Activated B cell treated with CpG ODN at 0.5 μM for 24 hours (primary cell): ENCODE measurements at regions of chr20 and their contacts with region 1.

Region 1: DNA sequence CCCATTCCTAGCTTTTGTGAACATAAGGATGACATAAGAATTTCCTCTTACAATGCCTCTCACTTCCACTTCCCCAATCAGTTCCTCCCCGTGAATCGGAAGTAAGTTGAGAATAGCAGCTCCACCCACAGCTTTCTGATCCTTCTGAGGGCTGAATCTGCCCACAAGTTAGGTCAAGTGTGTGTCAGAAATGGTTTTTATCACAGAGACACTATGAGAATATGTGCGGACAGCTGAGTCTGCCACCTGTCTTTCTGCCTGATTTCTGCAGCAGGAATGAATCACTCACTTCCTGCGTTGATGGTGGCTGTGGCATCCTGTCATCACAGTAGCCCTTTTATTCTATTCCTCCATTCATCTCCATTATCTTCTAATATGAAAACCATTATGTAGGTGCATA is 70.2 kb downstream of the RIN2 start:
- DNase-seq: no peak
- ATAC-seq: peak; percentile 96
- H3K4me3 Mint-ChIP-seq: peak overlapping the region; percentile 6
- H3K27ac Mint-ChIP-seq: peak overlapping the region; percentile 56
- H3K4me1 Mint-ChIP-seq: peaks cover 58% of the 10 kb centered on the region
- H3K27me3 Mint-ChIP-seq: no peaks in the 10 kb centered on the region
- CTCF ChIP-seq: no peak

Region 2: DNA sequence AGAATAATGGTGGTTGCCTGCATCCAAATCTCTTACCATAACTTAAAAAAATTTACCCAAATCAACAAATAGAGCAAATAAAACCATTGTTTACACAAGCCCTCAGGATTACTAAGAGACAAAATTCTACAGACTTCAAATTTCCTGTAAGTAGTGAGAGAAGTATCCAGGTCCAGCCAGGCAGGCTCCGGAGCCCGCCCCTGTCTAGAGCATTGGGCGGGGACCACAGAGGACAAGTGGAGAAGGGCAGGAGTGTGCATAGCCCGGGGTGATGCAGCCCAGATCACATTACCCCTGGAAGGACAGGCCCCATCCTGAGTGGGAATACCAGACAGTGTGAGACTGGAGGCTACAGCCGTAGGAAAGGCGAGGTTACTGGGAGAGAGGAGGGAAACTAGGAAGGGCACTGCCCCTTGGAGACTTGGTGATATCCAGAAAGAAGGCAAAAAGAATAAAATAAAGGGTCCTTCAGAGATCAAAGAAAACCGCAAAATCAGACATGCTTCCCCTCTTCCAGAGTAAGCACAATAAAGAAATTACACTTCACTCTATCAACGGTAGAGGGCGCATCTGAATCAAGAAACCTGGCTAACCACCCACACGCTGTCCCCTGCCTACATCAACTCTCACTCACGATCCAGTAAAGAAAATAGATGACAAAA is 43.6 kb before region 1 on chr20:
- CTCF ChIA-PET with region 1: interaction called, 36 read pairs
- POLR2A ChIA-PET with region 1: no interaction called
- intact Hi-C with region 1: loop called (anchors 1 kb)
- DNase-seq: no peak
- ATAC-seq: peak; percentile 71
- H3K4me3 Mint-ChIP-seq: no peak overlapping the region
- H3K27ac Mint-ChIP-seq: no peak overlapping the region
- H3K4me1 Mint-ChIP-seq: peaks cover 22% of the 10 kb centered on the region
- H3K27me3 Mint-ChIP-seq: no peaks in the 10 kb centered on the region
- CTCF ChIP-seq: no peak

Region 3: DNA sequence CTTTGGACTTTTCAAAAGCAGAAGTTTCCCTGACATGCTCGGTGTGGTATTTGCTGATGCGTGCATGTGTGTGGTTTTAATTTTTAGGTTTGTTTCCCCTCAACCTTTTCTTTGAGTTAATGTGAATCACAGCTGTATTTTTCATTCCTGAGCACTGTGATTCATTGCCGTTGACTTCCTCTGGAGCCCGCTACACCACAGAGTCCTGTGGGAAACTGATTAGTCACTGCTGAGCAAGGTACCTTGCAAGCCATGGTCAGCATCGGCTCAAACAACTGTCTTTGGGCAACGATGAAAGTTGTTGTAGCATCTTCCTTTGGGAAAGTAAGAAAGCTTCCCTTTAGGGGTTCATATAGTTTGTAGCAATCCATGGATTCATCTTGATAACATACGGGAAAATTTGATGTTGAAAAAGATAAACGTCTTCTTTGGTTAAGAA is 12.7 kb before region 1 on chr20:
- CTCF ChIA-PET with region 1: interaction called, 16 read pairs
- POLR2A ChIA-PET with region 1: interaction called, 5 read pairs
- intact Hi-C with region 1: loop called (anchors 1 kb)
- DNase-seq: peak; percentile 31
- ATAC-seq: peak; percentile 91
- H3K4me3 Mint-ChIP-seq: peak overlapping the region; percentile 72
- H3K27ac Mint-ChIP-seq: peak overlapping the region; percentile 78
- H3K4me1 Mint-ChIP-seq: peaks cover 70% of the 10 kb centered on the region
- H3K27me3 Mint-ChIP-seq: no peaks in the 10 kb centered on the region
- CTCF ChIP-seq: no peak

Region 4: GRCh38 chr20:19915111-19915798 is 87.0 kb after region 1 on chr20:
- CTCF ChIA-PET with region 1: interaction called, 3 read pairs
- POLR2A ChIA-PET with region 1: no interaction called
- intact Hi-C with region 1: loop called (anchors 5 kb)
- DNase-seq: peak; percentile 28
- ATAC-seq: peak; percentile 78
- H3K4me3 Mint-ChIP-seq: peak overlapping the region; percentile 29
- H3K27ac Mint-ChIP-seq: peak overlapping the region; percentile 87
- H3K4me1 Mint-ChIP-seq: peaks cover 65% of the 10 kb centered on the region
- H3K27me3 Mint-ChIP-seq: no peaks in the 10 kb centered on the region
- CTCF ChIP-seq: no peak

Region 5: DNA sequence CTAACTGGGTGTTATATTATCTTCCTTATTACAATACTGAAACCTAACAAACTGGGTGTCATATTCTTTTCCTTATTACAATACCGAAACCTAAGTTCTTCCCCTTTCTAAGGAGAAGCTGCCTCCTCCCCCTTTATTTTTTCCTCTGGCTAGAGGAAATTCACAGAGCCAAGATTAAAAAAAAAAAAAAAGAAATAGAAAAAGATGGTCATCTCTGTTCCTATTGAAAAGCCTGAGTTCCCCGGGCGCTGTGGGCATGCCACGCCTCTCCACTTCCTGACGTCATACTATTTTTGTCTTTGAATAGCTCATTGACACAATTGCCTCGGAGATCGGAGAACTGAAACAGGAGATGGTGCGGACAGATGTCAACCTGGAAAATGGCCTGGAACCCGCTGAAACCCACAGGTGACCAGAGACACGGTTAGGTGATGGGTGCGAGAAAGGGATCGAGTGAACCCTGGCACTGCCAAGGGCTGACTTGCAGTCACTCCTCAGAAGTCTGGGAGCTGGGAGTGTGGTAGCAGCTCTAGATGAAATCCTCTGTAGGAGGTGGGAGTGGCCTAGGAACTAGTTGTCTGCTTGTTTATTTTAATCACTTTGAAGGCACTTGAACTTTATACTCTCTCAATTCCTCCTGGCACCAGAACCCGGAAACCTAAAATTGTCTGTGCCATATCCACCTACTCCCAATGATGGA is 106.7 kb after region 1 on chr20:
- CTCF ChIA-PET with region 1: interaction called, 3 read pairs
- POLR2A ChIA-PET with region 1: interaction called, 5 read pairs
- intact Hi-C with region 1: loop called (anchors 1 kb)
- DNase-seq: peak; percentile 30
- ATAC-seq: peak; percentile 67
- H3K4me3 Mint-ChIP-seq: peak overlapping the region; percentile 72
- H3K27ac Mint-ChIP-seq: peak overlapping the region; percentile 71
- H3K4me1 Mint-ChIP-seq: peaks cover 48% of the 10 kb centered on the region
- H3K27me3 Mint-ChIP-seq: no peaks in the 10 kb centered on the region
- CTCF ChIP-seq: no peak

Region 6: DNA sequence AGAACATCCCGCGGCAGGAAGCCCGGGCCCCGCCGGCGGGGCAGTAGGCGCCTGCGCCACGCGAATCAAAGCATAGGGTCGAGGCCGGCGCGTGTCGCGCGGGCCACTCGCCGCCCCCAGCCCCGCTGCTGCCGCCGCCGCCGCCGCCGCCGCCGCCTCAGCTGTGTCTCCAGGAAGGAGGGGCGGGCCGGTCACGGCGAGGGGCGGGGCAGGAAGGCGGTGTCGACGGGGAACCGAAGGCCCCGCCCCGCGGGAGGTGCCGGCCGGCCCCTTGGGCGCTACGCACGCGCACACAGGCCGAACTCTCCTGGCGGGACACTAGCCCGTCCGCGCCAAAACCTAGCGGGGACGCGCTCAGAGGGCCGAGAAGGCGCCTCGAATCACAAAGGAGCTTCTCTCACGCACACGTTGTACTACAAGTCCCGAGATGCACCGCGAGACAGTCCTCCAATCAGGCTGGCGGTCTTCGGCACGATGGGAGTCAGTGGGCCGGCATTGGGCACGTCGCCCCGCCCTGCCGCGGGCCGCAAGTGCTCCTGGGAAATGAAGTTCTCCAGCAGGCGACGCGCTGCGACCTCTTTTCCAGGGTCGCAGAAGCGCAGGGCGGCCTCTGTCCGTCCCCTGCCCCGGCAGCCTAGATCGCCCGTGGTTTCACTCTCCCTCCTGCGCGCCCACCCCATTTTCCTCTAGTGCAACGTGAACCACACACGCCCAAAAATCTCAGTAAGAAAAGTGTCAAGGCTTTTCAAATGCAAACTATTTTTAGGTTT is 884.4 kb after region 1 on chr20 and contains the start of gene RALGAPA2:
- CTCF ChIA-PET with region 1: no interaction called
- POLR2A ChIA-PET with region 1: no interaction called
- intact Hi-C with region 1: loop called (anchors 10 kb)
- DNase-seq: peak; percentile 97
- ATAC-seq: peak; percentile 96
- H3K4me3 Mint-ChIP-seq: peak within 1 kb of the TSS; percentile 90
- H3K27ac Mint-ChIP-seq: peak within 1 kb of the TSS; percentile 92
- H3K4me1 Mint-ChIP-seq: peaks cover 26% of the 10 kb centered on the region
- H3K27me3 Mint-ChIP-seq: no peaks in the 10 kb centered on the region
- CTCF ChIP-seq: no peak
- total RNA-seq, gene RALGAPA2: 16.5 and 19.2 TPM in 2 replicates